Tibial artery (tissue), 4 donors: ENCODE measurements at regions of chr4 and their contacts with region 1.

Region 1: GRCh38 chr4:74932816-74933561 is at the start of gene PARM1:
- DNase-seq: peak; percentile 90 to 97
- H3K4me3 ChIP-seq: peak within 1 kb of the TSS; percentile 60 to 78
- H3K27ac ChIP-seq: peak within 1 kb of the TSS; percentile 84 to 91
- H3K4me1 ChIP-seq: peaks cover 0 to 31% (median 6%) of the 10 kb centered on the region in 4 donors
- H3K27me3 ChIP-seq: no peaks in the 10 kb centered on the region
- CTCF ChIP-seq: peak; percentile 75 to 87

Region 2: GRCh38 chr4:74838746-74839370 is 94.1 kb before region 1 on chr4:
- intact Hi-C with region 1: no loop called
- DNase-seq: no peak
- H3K4me3 ChIP-seq: no peak overlapping the region
- H3K27ac ChIP-seq: no peak overlapping the region
- H3K4me1 ChIP-seq: no peaks in the 10 kb centered on the region
- H3K27me3 ChIP-seq: no peaks in the 10 kb centered on the region
- CTCF ChIP-seq: no peak

Region 3: DNA sequence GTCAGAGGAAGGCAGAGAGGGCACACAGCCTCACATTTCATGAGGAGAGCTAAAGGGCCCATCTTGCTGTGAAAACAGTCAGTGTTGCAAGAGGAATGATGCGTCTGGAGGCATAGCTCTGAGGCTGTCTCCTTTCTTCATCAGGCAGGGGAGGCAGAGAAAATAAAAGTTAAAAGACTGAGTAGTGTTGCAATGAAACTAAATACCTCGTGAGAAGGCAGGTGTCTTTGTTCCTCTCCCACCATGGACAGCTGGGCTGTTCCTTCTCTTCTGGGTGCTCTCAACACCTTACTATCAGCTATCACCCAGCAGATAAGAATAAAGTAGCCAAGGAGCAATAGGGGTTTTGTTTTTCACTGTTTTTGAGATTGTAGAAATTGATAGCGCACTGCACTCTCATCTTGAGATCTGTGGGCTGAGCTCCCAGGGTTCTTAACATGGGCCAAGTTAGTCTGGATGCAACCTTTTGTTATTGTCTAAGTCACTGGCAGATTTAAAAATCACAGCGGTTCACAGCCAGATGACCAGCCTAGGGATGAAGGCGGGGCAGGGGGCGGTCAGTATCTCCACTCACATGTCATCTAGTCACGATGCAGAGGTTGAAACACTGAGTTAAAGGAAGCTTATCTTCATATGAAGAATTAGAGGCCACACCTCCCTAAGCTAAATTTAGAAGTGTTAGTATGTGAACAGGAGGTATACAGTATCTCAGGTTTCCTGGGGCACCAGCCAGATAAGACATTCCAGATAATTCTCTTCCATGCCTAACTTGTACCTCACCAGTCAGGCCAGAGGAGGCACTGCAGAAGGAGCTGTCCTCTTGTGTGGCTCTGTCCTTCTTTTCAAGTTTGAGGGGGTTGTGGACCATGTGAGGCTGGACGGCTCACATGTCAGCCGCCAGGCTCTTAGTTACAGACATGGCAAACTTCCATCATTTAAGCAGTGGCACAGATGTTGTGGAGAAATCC is 36.8 kb after region 1 on chr4:
- intact Hi-C with region 1: no loop called
- DNase-seq: peak in 1 of 2 donors; percentile 66
- H3K4me3 ChIP-seq: no peak overlapping the region
- H3K27ac ChIP-seq: peak overlapping the region; percentile 15 to 62
- H3K4me1 ChIP-seq: peaks cover 0 to 86% (median 39%) of the 10 kb centered on the region in 4 donors
- H3K27me3 ChIP-seq: no peaks in the 10 kb centered on the region
- CTCF ChIP-seq: peak; percentile 30 to 36

Region 4: DNA sequence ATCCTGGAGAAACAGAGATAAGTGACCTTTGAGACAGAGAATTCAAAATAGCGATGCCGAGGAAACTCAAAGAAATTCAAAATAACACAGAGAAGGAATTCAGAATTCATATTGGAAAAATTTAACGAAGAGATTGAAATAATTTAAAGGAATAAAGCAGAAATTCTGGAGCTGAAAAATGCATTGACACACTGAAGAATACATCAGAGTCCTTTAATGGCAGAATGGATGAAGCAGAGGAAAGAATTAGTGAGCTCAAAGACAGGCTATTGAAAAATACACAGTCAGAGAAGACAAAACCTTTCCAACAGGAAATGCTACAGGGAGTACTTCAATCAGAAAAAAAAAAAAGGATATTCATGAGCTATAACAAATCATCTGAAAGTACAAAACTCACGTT is 185.8 kb after region 1 on chr4:
- intact Hi-C with region 1: loop called (anchors 2 kb)
- DNase-seq: no peak
- H3K4me3 ChIP-seq: no peak overlapping the region
- H3K27ac ChIP-seq: no peak overlapping the region
- H3K4me1 ChIP-seq: no peaks in the 10 kb centered on the region
- H3K27me3 ChIP-seq: no peaks in the 10 kb centered on the region
- CTCF ChIP-seq: no peak

Region 5: GRCh38 chr4:75207882-75208281 is 274.9 kb after region 1 on chr4:
- intact Hi-C with region 1: no loop called
- DNase-seq: no peak
- H3K4me3 ChIP-seq: no peak overlapping the region
- H3K27ac ChIP-seq: no peak overlapping the region
- H3K4me1 ChIP-seq: no peaks in the 10 kb centered on the region
- H3K27me3 ChIP-seq: no peaks in the 10 kb centered on the region
- CTCF ChIP-seq: no peak

Region 6: DNA sequence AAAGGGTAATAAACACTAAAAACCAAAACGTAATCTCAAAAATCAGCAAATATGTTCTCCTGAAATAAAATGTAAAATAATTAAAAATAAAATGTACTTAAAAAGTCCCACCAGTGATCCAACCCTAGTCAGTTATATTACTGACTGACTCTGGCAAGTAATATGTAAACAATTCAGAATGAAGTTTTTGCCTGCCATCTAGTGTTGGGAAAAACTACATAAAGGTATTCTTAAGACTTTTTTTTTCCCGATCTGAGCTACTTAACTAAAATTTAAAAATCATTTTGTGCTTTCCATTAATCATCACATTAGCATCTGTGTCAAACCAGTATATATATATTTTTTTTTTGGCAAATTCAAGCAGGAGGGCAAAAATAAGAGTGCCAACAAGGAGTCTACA is 557.2 kb after region 1 on chr4:
- intact Hi-C with region 1: loop called (anchors 5 kb)
- DNase-seq: no peak
- H3K4me3 ChIP-seq: no peak overlapping the region
- H3K27ac ChIP-seq: peak overlapping the region in 1 of 2 donors; percentile 38
- H3K4me1 ChIP-seq: peaks cover 0 to 13% (median 0%) of the 10 kb centered on the region in 4 donors
- H3K27me3 ChIP-seq: no peaks in the 10 kb centered on the region
- CTCF ChIP-seq: peak; percentile 40 to 44

Region 7: DNA sequence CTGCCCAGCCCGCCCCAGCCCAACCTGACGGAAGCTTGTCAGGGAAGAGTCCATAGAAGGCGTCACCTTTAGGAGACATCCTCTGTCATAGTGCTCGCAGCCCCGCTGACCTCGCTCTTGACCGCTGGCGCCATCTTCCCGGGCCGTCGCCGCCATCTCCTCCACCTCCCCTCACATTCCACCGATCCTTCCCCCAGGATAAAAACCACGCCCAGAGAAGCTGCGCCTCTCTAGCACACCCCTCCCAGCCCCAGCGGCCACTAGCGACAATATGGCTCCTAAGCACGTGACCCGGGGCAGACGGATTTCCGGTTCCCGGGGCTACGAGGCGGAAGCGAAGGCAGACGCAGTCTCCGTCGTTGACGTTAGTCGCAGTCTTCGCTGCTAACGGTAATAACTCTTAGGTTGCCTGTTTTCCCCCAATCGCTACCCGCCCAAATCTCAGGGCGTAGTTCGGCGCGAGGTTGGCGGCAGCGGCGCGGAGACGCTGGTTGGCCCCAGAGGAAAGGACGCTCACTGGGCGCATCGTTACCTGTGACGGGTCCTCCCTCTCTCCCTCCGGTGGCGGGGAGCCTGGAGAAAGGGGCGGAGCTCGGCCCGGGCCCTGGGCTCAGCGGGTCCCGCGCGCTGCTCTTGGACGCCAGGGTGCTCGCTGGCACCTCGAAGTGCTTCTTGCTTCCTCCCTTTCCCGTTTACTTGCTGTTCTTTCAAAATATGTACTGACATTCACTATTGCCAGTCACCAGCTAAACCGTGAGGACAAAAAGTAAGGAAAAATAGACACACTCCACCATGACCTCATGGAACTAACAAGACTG is 581.4 kb after region 1 on chr4 and contains the starts of genes RCHY1 and THAP6:
- intact Hi-C with region 1: loop called (anchors 2 kb)
- DNase-seq: peak; percentile 97
- H3K4me3 ChIP-seq: peak within 1 kb of the TSS; percentile 63 to 93
- H3K27ac ChIP-seq: peak within 1 kb of the TSS; percentile 91 to 98
- H3K4me1 ChIP-seq: peaks cover 0 to 54% (median 27%) of the 10 kb centered on the region in 4 donors
- H3K27me3 ChIP-seq: no peaks in the 10 kb centered on the region
- CTCF ChIP-seq: peak in 1 of 2 experiments; percentile 36